IMR-90 (cell line): ENCODE measurements at regions of chr1 and their contacts with region 1.

Region 1: GRCh38 chr1:67149179-67149770 is 14.5 kb upstream of the C1orf141 start:
- DNase-seq: peak; percentile 82
- ATAC-seq: peak; percentile 98
- H3K4me3 ChIP-seq: no peak overlapping the region
- H3K27ac ChIP-seq: no peak overlapping the region
- H3K4me1 ChIP-seq: no peaks in the 10 kb centered on the region
- H3K27me3 ChIP-seq: no peaks in the 10 kb centered on the region; the same call in 1 of the 2 replicates
- CTCF ChIP-seq: peak; percentile 99
- POLR2A ChIP-seq: 0 out of 2 replicates have a peak, but pooled peaks have one; percentile 29
- RAD21 ChIP-seq: peak; percentile 97

Region 2: GRCh38 chr1:66996018-66996682 is 153.1 kb before region 1 on chr1:
- CTCF ChIA-PET with region 1: interaction called, 62 read pairs
- POLR2A ChIA-PET with region 1: no interaction called
- dilution Hi-C with region 1: no loop called
- in situ Hi-C with region 1: loop called (anchors 5 kb)
- intact Hi-C with region 1: loop called (anchors 1 kb)
- DNase-seq: peak; percentile 77
- ATAC-seq: peak; percentile 84
- H3K4me3 ChIP-seq: no peak overlapping the region
- H3K27ac ChIP-seq: no peak overlapping the region
- H3K4me1 ChIP-seq: no peaks in the 10 kb centered on the region
- H3K27me3 ChIP-seq: no peaks in the 10 kb centered on the region
- CTCF ChIP-seq: peak; percentile 90
- POLR2A ChIP-seq: no peak
- RAD21 ChIP-seq: peak; percentile 97

Region 3: GRCh38 chr1:67005068-67005467 is 144.2 kb before region 1 on chr1:
- CTCF ChIA-PET with region 1: interaction called, 10 read pairs
- POLR2A ChIA-PET with region 1: no interaction called
- dilution Hi-C with region 1: no loop called
- in situ Hi-C with region 1: no loop called
- intact Hi-C with region 1: loop called (anchors 1 kb)
- DNase-seq: no peak
- ATAC-seq: no peak
- H3K4me3 ChIP-seq: no peak overlapping the region
- H3K27ac ChIP-seq: no peak overlapping the region
- H3K4me1 ChIP-seq: no peaks in the 10 kb centered on the region
- H3K27me3 ChIP-seq: no peaks in the 10 kb centered on the region
- CTCF ChIP-seq: no peak
- POLR2A ChIP-seq: no peak
- RAD21 ChIP-seq: no peak

Region 4: DNA sequence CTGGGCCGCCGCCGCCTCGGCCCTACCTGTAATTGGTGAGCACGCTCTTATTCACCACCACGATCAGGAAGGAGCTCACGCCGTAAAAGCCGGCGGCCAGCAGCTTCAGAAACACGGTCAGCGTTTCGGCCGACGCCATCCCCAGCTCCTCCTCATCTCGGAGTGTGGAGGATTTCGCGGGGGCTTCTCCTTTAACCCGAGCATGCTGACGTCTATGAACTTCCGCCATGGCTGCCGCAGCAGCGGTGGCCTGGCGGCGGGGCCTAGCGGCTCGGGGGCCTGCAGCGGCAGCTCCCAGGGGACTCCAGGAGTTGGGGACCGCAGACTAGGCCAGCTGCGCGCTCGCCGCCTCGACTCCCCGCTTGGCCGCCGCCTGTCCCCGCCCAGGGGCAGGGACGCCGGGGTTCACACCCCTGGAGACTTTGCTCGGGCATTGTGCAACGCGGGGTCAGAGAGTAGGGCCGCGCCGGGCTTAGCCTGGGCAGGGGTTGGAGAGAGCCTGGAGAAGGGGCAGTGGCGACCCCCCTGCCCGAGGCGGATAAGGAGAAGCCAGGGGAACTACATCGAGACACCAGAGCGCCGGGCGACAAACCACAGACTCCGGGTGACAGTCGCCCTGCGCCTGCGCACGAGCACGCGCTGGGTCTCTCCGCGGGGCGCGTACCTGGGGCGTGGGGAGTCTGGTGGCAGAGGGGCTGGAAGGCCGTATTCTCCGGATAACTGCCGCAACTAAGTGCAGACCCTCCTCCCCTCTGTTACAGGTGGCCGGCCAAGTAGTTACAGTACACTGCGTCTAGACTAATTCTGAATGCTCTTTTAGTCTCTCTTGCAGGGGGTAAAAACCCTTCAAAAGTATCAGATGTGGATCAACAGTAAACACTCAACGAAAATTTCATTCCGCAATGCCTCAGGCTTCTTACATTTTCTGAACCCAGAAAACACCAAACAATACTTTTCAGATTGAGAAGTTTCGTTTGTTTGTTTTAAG is 95.2 kb before region 1 on chr1 and contains the start of gene SLC35D1:
- CTCF ChIA-PET with region 1: interaction called, 5 read pairs
- POLR2A ChIA-PET with region 1: no interaction called
- dilution Hi-C with region 1: no loop called
- in situ Hi-C with region 1: no loop called
- intact Hi-C with region 1: loop called (anchors 1 kb)
- DNase-seq: peak; percentile 53
- ATAC-seq: peak; percentile 74
- H3K4me3 ChIP-seq: peak within 1 kb of the TSS; percentile 93
- H3K27ac ChIP-seq: peak within 1 kb of the TSS; percentile 90
- H3K4me1 ChIP-seq: peaks cover 8% of the 10 kb centered on the region
- H3K27me3 ChIP-seq: no peaks in the 10 kb centered on the region
- CTCF ChIP-seq: no peak
- POLR2A ChIP-seq: peak; percentile 82
- RAD21 ChIP-seq: no peak
- total RNA-seq, gene SLC35D1: 16.3 and 23.1 TPM in 2 replicates

Region 5: GRCh38 chr1:67214420-67215174 is 65.3 kb after region 1 on chr1:
- CTCF ChIA-PET with region 1: interaction called, 9 read pairs
- POLR2A ChIA-PET with region 1: no interaction called
- dilution Hi-C with region 1: no loop called
- in situ Hi-C with region 1: no loop called
- intact Hi-C with region 1: loop called (anchors 5 kb)
- DNase-seq: peak; percentile 29
- ATAC-seq: peak; percentile 62
- H3K4me3 ChIP-seq: no peak overlapping the region
- H3K27ac ChIP-seq: no peak overlapping the region
- H3K4me1 ChIP-seq: no peaks in the 10 kb centered on the region
- H3K27me3 ChIP-seq: no peaks in the 10 kb centered on the region
- CTCF ChIP-seq: peak; percentile 55
- POLR2A ChIP-seq: no peak
- RAD21 ChIP-seq: peak; percentile 36

Region 6: DNA sequence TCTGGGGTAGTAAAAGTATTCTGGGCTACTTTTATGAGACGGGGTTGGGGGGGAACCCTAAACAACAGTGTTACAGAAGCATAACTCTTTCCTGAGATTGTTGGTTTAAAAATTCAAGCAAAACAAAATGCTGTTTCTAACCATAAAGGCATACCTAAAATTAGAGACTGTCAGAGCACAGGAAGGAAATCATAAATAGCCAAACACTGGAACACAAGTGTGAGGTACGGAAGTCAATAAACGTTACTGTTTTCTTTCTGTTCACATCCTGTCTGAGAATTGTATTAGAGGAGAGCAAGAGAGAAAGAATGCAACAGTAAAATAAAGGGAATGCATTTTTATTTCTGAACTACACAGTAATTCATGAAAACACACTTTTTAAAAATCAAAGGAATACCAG is 115.6 kb after region 1 on chr1:
- CTCF ChIA-PET with region 1: no interaction called
- POLR2A ChIA-PET with region 1: no interaction called
- dilution Hi-C with region 1: no loop called
- in situ Hi-C with region 1: no loop called
- intact Hi-C with region 1: no loop called
- DNase-seq: no peak
- ATAC-seq: no peak
- H3K4me3 ChIP-seq: no peak overlapping the region
- H3K27ac ChIP-seq: no peak overlapping the region
- H3K4me1 ChIP-seq: no peaks in the 10 kb centered on the region
- H3K27me3 ChIP-seq: peaks cover 5% of the 10 kb centered on the region
- CTCF ChIP-seq: no peak
- POLR2A ChIP-seq: no peak
- RAD21 ChIP-seq: no peak

Region 7: GRCh38 chr1:67869233-67869632 is 720.0 kb after region 1 on chr1:
- CTCF ChIA-PET with region 1: no interaction called
- POLR2A ChIA-PET with region 1: no interaction called
- dilution Hi-C with region 1: no loop called
- in situ Hi-C with region 1: no loop called
- intact Hi-C with region 1: no loop called
- DNase-seq: no peak
- ATAC-seq: no peak
- H3K4me3 ChIP-seq: no peak overlapping the region
- H3K27ac ChIP-seq: no peak overlapping the region
- H3K4me1 ChIP-seq: no peaks in the 10 kb centered on the region
- H3K27me3 ChIP-seq: no peaks in the 10 kb centered on the region
- CTCF ChIP-seq: no peak
- POLR2A ChIP-seq: no peak
- RAD21 ChIP-seq: no peak